Vagina (tissue), 2 donors: ENCODE measurements at regions of chr16 and their contacts with region 1.

Region 1: GRCh38 chr16:50210266-50211038 is 55.9 kb upstream of the ADCY7 start:
- DNase-seq: no peak
- H3K4me3 ChIP-seq: no peak overlapping the region
- H3K27ac ChIP-seq: peak overlapping the region; percentile 16
- H3K4me1 ChIP-seq: peaks cover 38% of the 10 kb centered on the region
- H3K27me3 ChIP-seq: no peaks in the 10 kb centered on the region
- CTCF ChIP-seq: peak in 1 of 3 experiments; percentile 54
- POLR2A ChIP-seq: no peak

Region 2: GRCh38 chr16:48999508-48999907 is 1210.9 kb before region 1 on chr16:
- intact Hi-C with region 1: loop called (anchors 5 kb)
- DNase-seq: no peak
- H3K4me3 ChIP-seq: no peak overlapping the region
- H3K27ac ChIP-seq: no peak overlapping the region
- H3K4me1 ChIP-seq: no peaks in the 10 kb centered on the region
- H3K27me3 ChIP-seq: no peaks in the 10 kb centered on the region
- CTCF ChIP-seq: no peak
- POLR2A ChIP-seq: no peak

Region 3: DNA sequence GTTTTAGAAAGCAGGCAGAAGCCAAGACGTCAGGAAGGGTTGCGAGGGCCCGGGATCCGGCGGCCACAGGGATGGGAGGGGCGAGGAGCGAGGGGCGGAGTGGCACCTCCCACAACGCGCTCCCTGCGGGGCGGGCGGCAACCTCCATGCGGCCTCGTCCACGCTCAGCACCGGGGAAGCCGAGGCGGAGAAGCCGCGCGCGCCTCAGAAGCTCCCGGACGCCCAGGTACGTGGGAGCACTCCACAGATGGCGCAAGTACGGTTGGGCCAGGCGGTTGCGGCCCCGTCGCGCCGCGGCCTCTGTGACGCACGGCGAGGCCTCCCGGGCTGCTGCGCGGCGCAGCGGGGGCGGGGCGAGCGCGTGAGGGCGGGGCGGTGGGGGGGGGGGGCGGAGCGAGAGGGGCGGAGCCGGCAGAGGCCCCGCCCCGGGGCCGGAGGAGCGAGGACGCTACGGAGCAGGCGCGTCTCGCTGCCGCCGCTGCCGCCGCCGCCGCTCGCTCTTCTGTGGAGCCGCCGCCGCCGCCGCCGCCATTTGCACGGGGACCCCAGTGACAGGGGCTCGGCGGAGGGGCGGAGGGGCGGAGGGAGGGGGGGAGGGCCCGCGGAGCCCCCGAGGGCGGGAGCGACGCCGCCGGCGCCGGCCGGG is 57.5 kb before region 1 on chr16 and contains the start of gene TENT4B:
- intact Hi-C with region 1: no loop called
- DNase-seq: no peak
- H3K4me3 ChIP-seq: peak within 1 kb of the TSS; percentile 85 to 88
- H3K27ac ChIP-seq: peak within 1 kb of the TSS; percentile 93
- H3K4me1 ChIP-seq: peaks cover 36% of the 10 kb centered on the region
- H3K27me3 ChIP-seq: no peaks in the 10 kb centered on the region
- CTCF ChIP-seq: no peak
- POLR2A ChIP-seq: peak in 1 of 2 donors; percentile 59
- total RNA-seq, gene TENT4B: 14.0 TPM